Naive thymus-derived CD4-positive, alpha-beta T cell (primary cell): ENCODE measurements at regions of chr2 and their contacts with region 1.

Region 1: GRCh38 chr2:11129598-11130449 is 25.4 kb upstream of the SLC66A3 start:
- DNase-seq: peak; percentile 72 to 91 (median 88)
- ATAC-seq: peak; percentile 93
- H3K4me3 ChIP-seq: peak overlapping the region; percentile 66
- H3K4me3 Mint-ChIP-seq: peak overlapping the region; percentile 72 to 88 (median 78)
- H3K27ac ChIP-seq: peak overlapping the region; percentile 75
- H3K27ac Mint-ChIP-seq: peak overlapping the region in 8 of 9 donors; percentile 77 to 92 (median 86)
- H3K4me1 ChIP-seq: peaks cover 25 to 34% of the 10 kb centered on the region in 2 donors
- H3K4me1 Mint-ChIP-seq: peaks cover 8 to 45% (median 33%) of the 10 kb centered on the region in 7 donors
- H3K27me3 ChIP-seq: no peaks in the 10 kb centered on the region
- H3K27me3 Mint-ChIP-seq: peaks cover 0 to 15% (median 0%) of the 10 kb centered on the region in 5 donors

Region 2: GRCh38 chr2:10889651-10890215 is 240.1 kb before region 1 on chr2:
- CTCF ChIA-PET with region 1: no interaction called
- POLR2A ChIA-PET with region 1: no interaction called
- intact Hi-C with region 1: no loop called
- DNase-seq: no peak
- ATAC-seq: no peak
- H3K4me3 ChIP-seq: no peak overlapping the region
- H3K4me3 Mint-ChIP-seq: no peak overlapping the region
- H3K27ac ChIP-seq: no peak overlapping the region
- H3K27ac Mint-ChIP-seq: peak overlapping the region in 1 of 9 donors; percentile 66
- H3K4me1 ChIP-seq: no peaks in the 10 kb centered on the region
- H3K4me1 Mint-ChIP-seq: peaks cover 0 to 18% (median 0%) of the 10 kb centered on the region in 7 donors
- H3K27me3 ChIP-seq: no peaks in the 10 kb centered on the region
- H3K27me3 Mint-ChIP-seq: peaks cover 9 to 21% (median 10%) of the 10 kb centered on the region in 5 donors

Region 3: GRCh38 chr2:11004199-11004598 is 125.6 kb before region 1 on chr2:
- CTCF ChIA-PET with region 1: no interaction called
- POLR2A ChIA-PET with region 1: no interaction called
- intact Hi-C with region 1: no loop called
- DNase-seq: no peak
- ATAC-seq: no peak
- H3K4me3 ChIP-seq: no peak overlapping the region
- H3K4me3 Mint-ChIP-seq: no peak overlapping the region
- H3K27ac ChIP-seq: no peak overlapping the region
- H3K27ac Mint-ChIP-seq: no peak overlapping the region
- H3K4me1 ChIP-seq: no peaks in the 10 kb centered on the region
- H3K4me1 Mint-ChIP-seq: no peaks in the 10 kb centered on the region
- H3K27me3 ChIP-seq: no peaks in the 10 kb centered on the region
- H3K27me3 Mint-ChIP-seq: peaks cover 0 to 25% (median 16%) of the 10 kb centered on the region in 5 donors

Region 4: DNA sequence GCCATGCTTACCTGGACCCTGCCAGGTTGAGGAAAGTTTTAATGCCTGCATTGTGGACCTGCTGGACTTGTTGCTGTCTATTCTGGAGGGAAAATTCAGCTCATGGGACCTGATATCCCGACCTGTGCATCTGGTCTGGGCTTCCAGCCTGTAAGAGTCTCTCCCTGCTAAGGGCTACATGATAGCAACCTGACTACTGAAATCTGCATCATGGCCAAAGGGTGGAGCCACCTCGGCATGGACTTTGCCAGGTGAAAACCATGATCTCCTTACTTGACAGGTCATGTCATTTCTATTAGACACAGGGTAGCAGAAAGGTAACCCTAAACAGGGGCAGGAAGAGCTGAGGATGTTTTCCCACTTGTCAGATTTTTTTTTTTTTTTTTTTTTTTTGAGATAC is 12.5 kb after region 1 on chr2:
- CTCF ChIA-PET with region 1: interaction called, 14 read pairs
- POLR2A ChIA-PET with region 1: no interaction called
- intact Hi-C with region 1: no loop called
- DNase-seq: no peak
- ATAC-seq: no peak
- H3K4me3 ChIP-seq: no peak overlapping the region
- H3K4me3 Mint-ChIP-seq: no peak overlapping the region
- H3K27ac ChIP-seq: no peak overlapping the region
- H3K27ac Mint-ChIP-seq: no peak overlapping the region
- H3K4me1 ChIP-seq: no peaks in the 10 kb centered on the region
- H3K4me1 Mint-ChIP-seq: no peaks in the 10 kb centered on the region
- H3K27me3 ChIP-seq: no peaks in the 10 kb centered on the region
- H3K27me3 Mint-ChIP-seq: peaks cover 0 to 15% (median 0%) of the 10 kb centered on the region in 5 donors

Region 5: DNA sequence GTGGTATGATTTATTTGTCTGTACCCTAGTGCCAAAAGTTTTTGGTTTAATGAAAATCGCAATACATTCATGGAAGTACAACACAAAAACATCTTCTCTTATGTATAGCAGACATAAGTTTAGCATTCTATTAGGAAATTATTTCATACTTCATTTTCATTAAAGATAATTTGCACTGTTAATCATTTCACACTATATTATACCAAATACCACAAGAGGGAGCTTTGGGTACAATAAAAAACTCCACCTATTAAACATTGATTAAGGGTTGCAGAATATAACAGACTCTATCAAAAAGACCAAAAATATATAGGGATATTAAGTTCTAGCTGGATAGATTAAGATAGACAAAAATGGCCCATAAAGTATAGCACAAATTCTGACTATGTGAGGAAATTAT is 104.5 kb after region 1 on chr2:
- CTCF ChIA-PET with region 1: interaction called, 12 read pairs
- POLR2A ChIA-PET with region 1: no interaction called
- intact Hi-C with region 1: no loop called
- DNase-seq: peak in 1 of 9 donors; percentile 8
- ATAC-seq: no peak
- H3K4me3 ChIP-seq: no peak overlapping the region
- H3K4me3 Mint-ChIP-seq: no peak overlapping the region
- H3K27ac ChIP-seq: no peak overlapping the region
- H3K27ac Mint-ChIP-seq: no peak overlapping the region
- H3K4me1 ChIP-seq: no peaks in the 10 kb centered on the region
- H3K4me1 Mint-ChIP-seq: peaks cover 0 to 11% (median 5%) of the 10 kb centered on the region in 7 donors
- H3K27me3 ChIP-seq: no peaks in the 10 kb centered on the region
- H3K27me3 Mint-ChIP-seq: no peaks in the 10 kb centered on the region

Region 6: DNA sequence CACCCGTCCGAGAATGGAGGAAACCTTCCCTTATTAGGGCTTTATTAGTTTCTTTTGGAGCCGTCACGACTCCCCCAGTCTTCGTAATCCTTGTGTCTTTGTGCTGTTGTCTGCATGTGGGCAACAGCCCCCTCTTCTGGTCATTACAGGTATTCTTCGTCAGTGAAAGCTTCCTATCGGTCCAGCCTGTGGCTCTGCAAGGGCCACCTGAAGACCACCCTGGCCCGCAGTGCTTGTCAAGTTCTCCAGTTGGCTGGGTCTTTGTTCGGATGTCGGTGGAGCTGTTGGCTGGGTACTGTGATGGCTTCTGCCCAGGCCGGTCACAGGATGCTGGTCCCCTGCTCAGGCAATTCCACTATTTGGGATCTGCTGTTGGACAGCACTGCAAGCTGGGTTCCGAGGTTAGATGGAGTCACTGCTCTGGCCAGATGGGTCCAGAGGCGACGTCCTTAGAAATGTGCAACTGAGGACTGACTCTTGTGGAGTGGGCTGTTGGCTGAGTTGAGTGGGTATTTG is 317.0 kb after region 1 on chr2:
- CTCF ChIA-PET with region 1: interaction called, 44 read pairs
- POLR2A ChIA-PET with region 1: interaction called, 3 read pairs
- intact Hi-C with region 1: loop called in 1 of 2 experiments (anchors 1 kb)
- DNase-seq: peak; percentile 16 to 65 (median 54)
- ATAC-seq: peak; percentile 83
- H3K4me3 ChIP-seq: no peak overlapping the region
- H3K4me3 Mint-ChIP-seq: no peak overlapping the region
- H3K27ac ChIP-seq: no peak overlapping the region
- H3K27ac Mint-ChIP-seq: peak overlapping the region in 2 of 9 donors; percentile 17 to 52
- H3K4me1 ChIP-seq: no peaks in the 10 kb centered on the region
- H3K4me1 Mint-ChIP-seq: no peaks in the 10 kb centered on the region
- H3K27me3 ChIP-seq: no peaks in the 10 kb centered on the region
- H3K27me3 Mint-ChIP-seq: no peaks in the 10 kb centered on the region

Region 7: DNA sequence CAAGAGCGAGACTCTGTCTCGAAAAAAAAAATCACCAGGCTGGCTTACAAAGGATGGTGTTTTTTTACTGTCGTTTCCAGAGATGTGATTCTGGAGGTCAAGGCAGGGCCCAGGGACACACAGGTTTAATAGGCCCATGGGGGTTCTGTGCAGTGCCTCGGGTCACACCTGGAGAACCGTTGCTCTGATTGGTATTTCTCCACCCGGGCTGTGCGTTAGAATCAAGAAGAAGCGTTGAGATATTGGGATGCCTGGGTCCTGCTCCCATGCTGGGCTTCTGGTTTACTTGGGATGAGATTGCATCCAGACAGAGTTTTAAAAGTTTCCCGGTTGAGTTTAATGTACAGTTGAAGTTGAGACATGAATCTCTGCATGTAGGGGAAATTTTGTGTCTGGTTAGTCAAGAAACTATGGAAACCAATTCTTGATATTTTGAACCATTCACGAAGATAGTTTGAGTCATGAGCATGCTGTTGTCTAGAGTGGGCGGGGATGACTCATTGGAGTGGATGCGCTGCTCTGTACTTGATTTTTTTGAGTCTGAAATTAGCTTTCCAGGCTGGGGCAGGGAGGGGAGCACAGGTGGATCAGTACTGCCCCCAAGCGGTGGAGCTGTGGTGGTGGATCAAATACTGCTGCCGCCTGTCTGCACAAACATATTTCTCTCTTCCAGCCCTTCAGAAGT is 454.2 kb after region 1 on chr2:
- CTCF ChIA-PET with region 1: interaction called, 19 read pairs
- POLR2A ChIA-PET with region 1: no interaction called
- intact Hi-C with region 1: loop called in 1 of 2 experiments (anchors 1 kb)
- DNase-seq: peak; percentile 12 to 86 (median 34)
- ATAC-seq: peak; percentile 79
- H3K4me3 ChIP-seq: no peak overlapping the region
- H3K4me3 Mint-ChIP-seq: no peak overlapping the region
- H3K27ac ChIP-seq: no peak overlapping the region
- H3K27ac Mint-ChIP-seq: no peak overlapping the region
- H3K4me1 ChIP-seq: no peaks in the 10 kb centered on the region
- H3K4me1 Mint-ChIP-seq: peaks cover 0 to 7% (median 3%) of the 10 kb centered on the region in 7 donors
- H3K27me3 ChIP-seq: peaks cover 0 to 3% of the 10 kb centered on the region in 2 donors
- H3K27me3 Mint-ChIP-seq: peaks cover 0 to 4% (median 0%) of the 10 kb centered on the region in 5 donors